ENCODE measurements at regions of chr14 and their contacts with region 1.

Region 1: DNA sequence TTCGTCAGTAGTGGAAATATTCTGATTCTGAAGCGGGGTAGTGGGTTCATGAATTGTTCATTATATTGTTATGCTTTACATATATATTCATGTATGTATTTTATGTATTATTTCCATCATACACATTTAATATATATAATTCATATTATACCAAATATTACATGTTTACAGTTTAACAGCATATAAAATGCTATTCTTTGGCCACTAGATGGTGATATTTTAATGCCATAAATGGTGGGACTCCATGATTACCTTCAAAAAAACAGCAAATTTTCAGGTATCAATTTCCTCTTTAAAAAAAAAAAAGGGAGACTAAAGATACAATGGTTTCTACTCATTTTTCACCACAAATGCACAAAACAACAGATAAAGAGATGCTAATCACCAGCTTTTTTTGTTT is 41.0 kb downstream of the BDKRB1 start:
- DNase-seq: no peak
- ATAC-seq: peak; percentile 58

Region 2: DNA sequence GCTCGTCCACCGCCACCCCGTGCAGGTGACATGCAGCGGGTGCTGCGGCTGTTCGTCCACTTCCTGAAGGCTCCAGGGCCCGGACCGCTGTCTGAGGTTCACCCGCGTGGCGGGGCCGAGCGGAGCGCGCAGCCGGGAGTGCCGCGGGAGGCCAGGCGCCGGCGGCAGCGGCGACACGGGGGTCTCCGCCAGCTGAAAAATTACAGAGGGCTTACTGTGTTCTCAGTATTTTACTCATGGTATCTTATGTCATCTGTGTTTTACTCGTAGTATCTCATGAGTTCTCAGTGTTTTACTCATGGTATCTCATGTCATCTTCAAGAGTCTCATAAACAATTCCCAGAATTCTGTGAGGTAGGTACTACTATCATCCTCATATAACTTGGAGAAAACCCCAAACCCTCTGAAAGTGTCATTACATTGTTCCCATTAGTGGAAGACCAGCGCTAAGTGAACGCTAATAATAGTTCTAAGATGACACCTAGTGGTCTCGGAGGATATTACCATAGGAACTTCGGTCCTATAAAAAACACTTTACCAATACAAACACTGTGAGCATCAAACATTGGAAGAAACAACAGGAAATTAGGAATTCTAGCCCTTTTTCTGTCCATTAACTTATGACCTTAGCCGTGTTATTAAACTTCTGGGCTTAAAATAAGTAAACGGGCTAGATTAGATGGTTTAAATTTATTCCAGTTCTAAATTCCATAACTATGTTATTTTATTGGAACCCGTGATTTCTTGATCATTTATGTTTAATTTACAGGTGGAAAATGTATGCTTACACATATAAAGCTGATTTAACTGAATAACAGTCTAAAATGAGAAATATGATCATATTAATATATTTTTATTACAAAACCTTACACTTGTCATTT is 127.3 kb after region 1 on chr14:
- intact Hi-C with region 1: loop called in 1 of 2 experiments (anchors 10 kb)
- DNase-seq: peak; percentile 37 to 60
- ATAC-seq: peak; percentile 96